Posterior vena cava (tissue), 2 donors: ENCODE measurements at regions of chr6 and their contacts with region 1.

Region 1: GRCh38 chr6:33211666-33212346 is 3.5 kb downstream of the RING1 start:
- DNase-seq: no peak

Region 2: GRCh38 chr6:33136310-33136900 is 75.4 kb before region 1 on chr6:
- intact Hi-C with region 1: loop called in 1 of 2 experiments (anchors 2 kb)
- DNase-seq: no peak

Region 3: DNA sequence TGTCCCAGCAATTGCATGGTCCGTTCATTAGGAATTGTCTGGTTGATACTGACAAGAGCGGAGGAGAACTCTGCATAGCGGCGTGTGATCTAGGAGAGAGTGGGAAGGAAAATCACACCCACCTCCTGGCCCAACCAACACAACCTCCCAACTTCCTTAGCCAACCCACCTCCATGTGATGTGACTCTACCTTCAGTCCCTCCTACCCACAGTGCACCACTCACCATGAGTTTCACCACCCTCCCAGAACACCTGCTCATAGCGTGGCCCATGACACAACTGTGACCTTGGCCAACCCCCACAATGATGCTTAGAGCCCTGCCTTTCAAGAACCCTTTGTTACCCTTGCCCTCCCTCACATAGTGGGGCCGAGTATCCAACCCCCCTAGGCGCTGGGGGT is 52.2 kb after region 1 on chr6:
- intact Hi-C with region 1: no loop called
- DNase-seq: no peak